Dorsolateral prefrontal cortex (tissue), 120 donors: ENCODE measurements at regions of chr16 and their contacts with region 1.

Region 1: GRCh38 chr16:21584817-21585216 is 14.6 kb upstream of the METTL9 start:
- DNase-seq: no peak
- H3K4me3 ChIP-seq: no peak overlapping the region
- H3K27ac ChIP-seq: peak overlapping the region in 1 of 59 donors; percentile 11
- H3K27me3 ChIP-seq: no peaks in the 10 kb centered on the region
- CTCF ChIP-seq: no peak

Region 2: DNA sequence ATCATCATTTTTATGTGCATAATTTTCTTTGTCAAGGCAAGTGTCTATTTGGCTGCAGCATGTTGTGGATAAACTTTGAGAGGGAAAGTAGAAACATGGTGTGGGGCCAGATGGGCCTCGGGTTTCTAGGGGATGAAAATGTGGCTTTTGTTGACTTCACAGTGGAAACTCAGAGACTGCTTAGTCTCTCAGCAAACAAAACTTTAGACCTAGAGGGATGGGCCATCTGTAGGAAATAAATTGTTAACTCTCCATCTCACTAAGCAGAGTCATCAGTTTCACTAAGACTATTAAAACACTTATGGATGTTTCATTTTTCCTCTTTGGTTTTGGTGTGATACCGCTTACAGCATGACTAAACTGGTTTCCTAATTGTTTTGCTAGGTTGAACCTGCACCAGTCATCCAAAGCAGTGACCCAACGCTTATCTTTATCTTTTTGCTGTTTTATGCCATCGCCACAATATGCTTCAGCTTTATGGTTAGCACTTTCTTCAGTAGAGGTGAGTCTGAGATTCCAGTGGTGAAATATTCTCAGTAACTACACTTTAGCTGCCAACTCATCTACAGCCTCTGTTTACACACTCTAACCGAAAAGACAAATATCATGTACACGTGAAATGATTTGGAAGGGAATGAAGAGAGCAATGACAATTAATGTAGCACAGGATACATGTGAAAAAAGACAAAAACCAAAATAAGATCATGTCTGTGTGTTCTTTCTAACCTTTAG is 246.1 kb before region 1 on chr16:
- intact Hi-C with region 1: no loop called
- DNase-seq: no peak
- H3K4me3 ChIP-seq: no peak overlapping the region
- H3K27ac ChIP-seq: no peak overlapping the region
- H3K27me3 ChIP-seq: peaks cover 0 to 3% (median 0%) of the 10 kb centered on the region in 45 donors
- CTCF ChIP-seq: no peak

Region 3: DNA sequence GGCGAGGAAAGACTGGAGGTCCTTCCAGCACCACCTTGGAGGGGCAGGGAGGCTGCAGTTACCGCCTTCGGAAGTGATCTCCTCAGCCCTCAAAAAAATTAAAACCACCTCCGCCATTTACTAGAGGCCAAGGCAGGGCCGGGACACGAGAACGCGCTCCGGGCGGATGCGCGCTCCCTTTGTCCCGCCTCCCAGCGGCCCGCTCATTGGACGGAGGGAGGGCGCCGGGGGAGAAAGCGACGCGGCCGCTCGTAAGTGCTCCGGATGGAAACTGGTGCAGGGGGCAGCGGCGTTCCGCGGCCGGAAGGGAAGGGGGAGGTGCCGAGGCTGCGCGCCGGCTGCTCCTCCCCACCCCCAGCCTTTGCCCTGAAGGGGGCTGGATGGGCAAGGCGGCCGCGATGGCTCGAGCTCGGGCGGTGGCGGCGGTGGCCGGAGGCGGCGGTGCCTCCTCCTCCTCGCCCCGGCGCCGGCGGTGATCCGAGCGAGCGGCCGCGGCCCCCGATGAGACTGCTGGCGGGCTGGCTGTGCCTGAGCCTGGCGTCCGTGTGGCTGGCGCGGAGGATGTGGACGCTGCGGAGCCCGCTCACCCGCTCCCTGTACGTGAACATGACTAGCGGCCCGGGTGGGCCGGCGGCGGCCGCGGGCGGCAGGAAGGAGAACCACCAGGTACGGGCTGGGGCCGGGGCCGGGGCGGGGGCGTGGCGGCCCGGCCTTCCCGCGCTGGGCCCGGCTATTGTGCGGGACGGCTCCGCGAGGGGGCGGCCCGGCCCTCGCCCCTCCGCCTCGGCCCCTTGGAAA is 14.6 kb after region 1 on chr16 and contains the start of gene METTL9:
- intact Hi-C with region 1: loop called in 1 of 2 experiments (anchors 2 kb)
- DNase-seq: peak; percentile 85 to 95 (median 94)
- H3K4me3 ChIP-seq: peak within 1 kb of the TSS; percentile 64 to 95 (median 87)
- H3K27ac ChIP-seq: peak within 1 kb of the TSS; percentile 49 to 97 (median 93)
- H3K27me3 ChIP-seq: no peaks in the 10 kb centered on the region
- CTCF ChIP-seq: peak in 42 of 56 donors; percentile 2 to 65 (median 36)
- total RNA-seq, gene METTL9: 52.4 to 107 (median 80.4) TPM

Region 4: DNA sequence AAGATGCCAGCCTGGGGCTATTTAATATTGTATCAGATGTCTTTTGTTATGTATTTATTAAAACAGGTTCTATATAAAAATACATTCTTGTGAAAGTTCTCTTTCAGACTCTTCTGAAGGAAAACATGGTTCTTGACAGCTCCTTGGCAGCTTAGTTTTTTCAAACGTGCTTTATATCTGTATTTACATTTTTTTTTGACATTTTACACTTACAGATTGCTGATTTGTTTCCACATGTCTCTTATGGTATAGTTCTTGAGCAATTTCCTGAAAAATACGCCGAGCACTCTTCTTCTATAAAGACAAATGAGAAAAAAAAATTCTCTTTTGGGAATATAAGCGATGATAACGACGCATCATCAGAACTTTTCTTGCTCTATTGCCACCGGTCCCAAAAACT is 58.0 kb after region 1 on chr16:
- intact Hi-C with region 1: loop called in 1 of 2 experiments (anchors 5 kb)
- DNase-seq: no peak
- H3K4me3 ChIP-seq: no peak overlapping the region
- H3K27ac ChIP-seq: peak overlapping the region in 30 of 59 donors; percentile 0 to 79 (median 36)
- H3K27me3 ChIP-seq: no peaks in the 10 kb centered on the region
- CTCF ChIP-seq: no peak

Region 5: GRCh38 chr16:21708533-21709115 is 123.8 kb after region 1 on chr16:
- intact Hi-C with region 1: loop called (anchors 2 to 10 kb)
- DNase-seq: peak; percentile 51 to 85 (median 64)
- H3K4me3 ChIP-seq: peak overlapping the region in 5 of 59 donors; percentile 6 to 28 (median 12)
- H3K27ac ChIP-seq: no peak overlapping the region
- H3K27me3 ChIP-seq: no peaks in the 10 kb centered on the region
- CTCF ChIP-seq: peak; percentile 74 to 93 (median 84)

Region 6: GRCh38 chr16:21713549-21714368 is 128.9 kb after region 1 on chr16:
- intact Hi-C with region 1: loop called (anchors 2 to 10 kb)
- DNase-seq: no peak
- H3K4me3 ChIP-seq: no peak overlapping the region
- H3K27ac ChIP-seq: no peak overlapping the region
- H3K27me3 ChIP-seq: no peaks in the 10 kb centered on the region
- CTCF ChIP-seq: no peak

Region 7: GRCh38 chr16:22206013-22206841 is 621.4 kb after region 1 on chr16 and contains the start of gene EEF2K:
- intact Hi-C with region 1: no loop called
- DNase-seq: peak; percentile 66 to 87 (median 82)
- H3K4me3 ChIP-seq: peak within 1 kb of the TSS; percentile 63 to 95 (median 87)
- H3K27ac ChIP-seq: peak within 1 kb of the TSS in 58 of 59 donors; percentile 41 to 93 (median 85)
- H3K27me3 ChIP-seq: no peaks in the 10 kb centered on the region
- CTCF ChIP-seq: peak; percentile 58 to 92 (median 78)
- total RNA-seq, gene EEF2K: 14.7 to 60.6 (median 28.2) TPM

Region 8: DNA sequence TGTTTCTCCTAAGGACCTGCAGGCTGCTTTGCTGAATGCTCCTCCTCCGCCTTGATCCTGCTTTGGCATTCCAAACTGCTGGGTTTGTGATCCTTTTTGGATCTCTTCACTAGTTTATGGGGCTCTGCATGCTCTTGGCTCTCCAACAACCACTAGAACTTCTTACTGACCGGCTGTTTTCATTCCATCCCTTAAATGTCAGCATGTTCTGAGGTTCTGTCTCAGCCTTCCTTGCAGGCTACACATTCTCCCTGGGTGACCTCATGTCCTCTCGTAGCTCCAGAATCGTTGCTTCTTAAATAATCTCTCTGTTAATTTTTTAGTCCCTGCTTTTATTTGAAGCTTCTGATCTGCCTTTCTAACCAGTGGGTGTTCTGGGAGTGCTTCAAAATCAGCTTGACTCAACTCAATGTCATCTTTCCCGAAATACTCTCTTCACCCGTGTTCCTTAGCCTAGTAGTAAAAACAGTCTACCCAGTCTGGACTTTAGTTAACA is 1110.1 kb after region 1 on chr16:
- intact Hi-C with region 1: loop called in 1 of 2 experiments (anchors 2 kb)
- DNase-seq: no peak
- H3K4me3 ChIP-seq: no peak overlapping the region
- H3K27ac ChIP-seq: peak overlapping the region in 14 of 59 donors; percentile 1 to 37 (median 10)
- H3K27me3 ChIP-seq: peaks cover 0 to 4% (median 0%) of the 10 kb centered on the region in 45 donors
- CTCF ChIP-seq: no peak